OCI-LY7 (cell line): ENCODE measurements at regions of chr13 and their contacts with region 1.

Region 1: DNA sequence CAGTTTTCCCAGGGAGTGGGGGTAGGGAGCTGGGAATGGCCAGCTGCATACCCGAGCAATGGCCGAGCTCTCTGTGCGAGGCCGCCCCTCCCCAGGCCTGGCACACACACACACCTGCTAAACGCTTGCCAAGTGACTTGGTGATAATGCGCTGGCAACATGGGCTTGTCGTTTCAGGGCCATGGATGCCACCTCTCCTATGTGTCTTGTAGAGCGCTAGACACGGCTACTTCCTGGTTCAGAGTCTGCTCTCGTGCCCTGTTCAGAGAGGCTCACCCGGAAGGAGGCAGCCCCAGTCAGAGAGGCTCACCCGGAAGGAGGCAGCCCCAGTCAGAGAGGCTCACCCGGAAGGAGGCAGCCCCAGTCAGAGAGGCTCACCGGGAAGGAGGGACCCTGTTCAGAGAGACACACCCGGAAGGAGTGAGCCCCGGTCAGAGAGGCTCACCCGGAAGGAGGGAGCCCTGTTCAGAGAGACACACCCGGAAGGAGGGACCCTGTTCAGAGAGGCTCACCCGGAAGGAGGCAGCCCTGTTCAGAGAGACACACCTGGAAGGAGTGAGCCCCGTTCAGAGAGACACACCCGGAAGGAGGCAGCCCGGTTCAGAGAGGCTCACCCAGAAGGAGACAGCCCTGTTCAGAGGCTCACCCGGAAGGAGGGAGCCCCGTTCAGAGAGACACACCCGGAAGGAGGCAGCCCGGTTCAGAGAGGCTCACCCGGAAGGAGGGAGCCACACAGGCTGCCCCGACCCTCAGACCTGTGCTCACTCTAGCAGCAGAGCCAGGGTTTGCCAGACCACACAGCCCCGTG is 4.2 kb downstream of the ADPRHL1 start:
- DNase-seq: peak; percentile 100
- H3K4me3 ChIP-seq: peak overlapping the region; percentile 93
- H3K27ac ChIP-seq: peak overlapping the region; percentile 94
- H3K4me1 ChIP-seq: peaks cover 53% of the 10 kb centered on the region
- CTCF ChIP-seq: no peak

Region 2: GRCh38 chr13:112942689-112943308 is 506.3 kb before region 1 on chr13:
- CTCF ChIA-PET with region 1: no interaction called
- POLR2A ChIA-PET with region 1: no interaction called
- intact Hi-C with region 1: loop called (anchors 2 kb)
- DNase-seq: peak; percentile 90
- H3K4me3 ChIP-seq: peak overlapping the region; percentile 16
- H3K27ac ChIP-seq: peak overlapping the region; percentile 70
- H3K4me1 ChIP-seq: peaks cover 22% of the 10 kb centered on the region
- CTCF ChIP-seq: peak; percentile 81

Region 3: GRCh38 chr13:113208424-113209335 is 240.4 kb before region 1 on chr13 and contains the start of gene PCID2:
- CTCF ChIA-PET with region 1: no interaction called
- POLR2A ChIA-PET with region 1: interaction called, 3 read pairs
- intact Hi-C with region 1: loop called (anchors 1 kb)
- DNase-seq: peak; percentile 88
- H3K4me3 ChIP-seq: peak within 1 kb of the TSS; percentile 94
- H3K27ac ChIP-seq: peak within 1 kb of the TSS; percentile 84
- H3K4me1 ChIP-seq: peaks cover 22% of the 10 kb centered on the region
- CTCF ChIP-seq: no peak
- total RNA-seq, gene PCID2: 38.3 and 41.9 TPM in 2 replicates

Region 4: GRCh38 chr13:113275387-113275786 is 173.7 kb before region 1 on chr13:
- CTCF ChIA-PET with region 1: no interaction called
- POLR2A ChIA-PET with region 1: no interaction called
- intact Hi-C with region 1: loop called (anchors 1 kb)
- DNase-seq: peak; percentile 40
- H3K4me3 ChIP-seq: no peak overlapping the region
- H3K27ac ChIP-seq: no peak overlapping the region
- H3K4me1 ChIP-seq: no peaks in the 10 kb centered on the region
- CTCF ChIP-seq: peak; percentile 67

Region 5: DNA sequence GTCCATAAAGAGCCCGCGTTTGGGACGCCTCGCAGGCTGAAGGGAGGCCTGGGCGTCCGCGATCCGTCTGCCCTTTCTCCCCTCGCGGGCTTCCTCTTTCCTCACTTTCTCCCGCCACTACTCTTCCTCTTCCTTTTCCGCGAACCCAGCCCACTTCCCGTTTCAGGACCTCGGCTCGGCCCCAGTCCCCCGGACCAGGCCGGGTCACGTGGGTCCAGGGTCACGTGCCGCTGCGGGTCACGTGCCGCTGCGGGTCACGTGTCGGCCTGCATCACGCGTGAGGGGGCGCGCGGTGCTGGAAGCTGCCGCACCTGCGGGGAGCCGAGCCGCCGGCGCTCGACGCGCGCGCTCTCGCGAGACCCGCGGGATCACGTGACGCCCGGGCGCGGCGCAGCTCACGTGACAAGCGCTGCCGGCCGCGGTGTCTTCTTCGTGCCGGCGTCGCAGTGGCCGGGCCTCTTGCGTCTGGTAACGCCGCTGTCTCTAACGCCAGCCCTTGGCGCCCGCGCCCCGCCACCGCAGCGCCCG is 152.2 kb before region 1 on chr13 and contains the start of gene LAMP1:
- CTCF ChIA-PET with region 1: no interaction called
- POLR2A ChIA-PET with region 1: interaction called, 5 read pairs
- intact Hi-C with region 1: loop called (anchors 2 kb)
- DNase-seq: peak; percentile 96
- H3K4me3 ChIP-seq: peak within 1 kb of the TSS; percentile 90
- H3K27ac ChIP-seq: peak within 1 kb of the TSS; percentile 63
- H3K4me1 ChIP-seq: peaks cover 11% of the 10 kb centered on the region
- CTCF ChIP-seq: no peak
- total RNA-seq, gene LAMP1: 9.3 and 12.2 TPM in 2 replicates

Region 6: GRCh38 chr13:113393563-113394338 is 55.3 kb before region 1 on chr13:
- CTCF ChIA-PET with region 1: no interaction called
- POLR2A ChIA-PET with region 1: no interaction called
- intact Hi-C with region 1: loop called (anchors 1 kb)
- DNase-seq: peak; percentile 84
- H3K4me3 ChIP-seq: peak overlapping the region; percentile 77
- H3K27ac ChIP-seq: peak overlapping the region; percentile 17
- H3K4me1 ChIP-seq: peaks cover 5% of the 10 kb centered on the region
- CTCF ChIP-seq: peak; percentile 63